Right cardiac atrium (tissue), 5 donors: ENCODE measurements at regions of chr10 and their contacts with region 1.

Region 1: DNA sequence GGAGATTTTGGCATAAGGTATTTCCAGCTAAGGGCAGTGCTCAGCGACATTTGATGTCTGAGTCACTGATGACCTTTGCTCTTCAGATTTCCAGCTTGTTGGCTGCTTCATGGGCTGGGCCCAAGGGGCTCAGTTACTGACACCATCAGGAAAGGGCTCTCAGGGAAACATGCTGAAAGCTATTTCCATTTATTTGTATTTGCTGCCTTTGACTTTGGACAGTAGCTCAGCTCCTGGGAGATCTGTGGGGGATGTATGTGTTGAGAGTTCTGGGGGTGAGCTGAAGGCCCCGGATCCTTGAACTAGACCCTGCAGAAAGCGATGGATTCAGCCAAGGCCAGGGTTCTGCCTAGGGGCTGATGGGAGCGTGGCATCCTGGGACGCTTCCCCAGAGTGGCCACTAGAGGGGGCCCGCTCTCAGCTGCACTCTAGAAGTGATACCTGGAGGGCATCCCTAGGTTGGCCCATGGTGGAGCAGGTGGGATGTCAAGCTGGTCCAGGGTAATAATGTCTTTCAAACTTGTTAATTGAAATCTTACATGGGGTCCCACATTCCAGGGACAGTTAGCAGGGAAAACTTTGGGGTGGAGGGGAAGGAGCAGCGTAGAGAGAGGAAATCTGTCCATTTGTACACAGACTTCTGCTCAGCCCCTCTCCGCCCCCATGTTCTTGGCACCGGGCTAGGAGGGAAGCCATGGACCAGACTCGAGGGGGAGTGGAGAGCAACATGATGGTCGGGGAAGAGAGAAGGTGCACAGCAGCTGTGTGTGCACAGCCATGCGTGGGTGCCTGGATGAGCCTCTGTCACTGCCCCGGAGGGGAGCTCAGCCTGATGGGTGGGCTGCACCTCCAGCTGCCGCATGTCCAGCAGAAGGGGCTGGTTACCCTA is 3.0 kb upstream of the BTBD16 start:
- DNase-seq: peak in 2 of 3 donors; percentile 48 to 70
- ATAC-seq: peak; percentile 60 to 76
- H3K4me3 ChIP-seq: no peak overlapping the region
- H3K27ac ChIP-seq: no peak overlapping the region
- H3K4me1 ChIP-seq: no peaks in the 10 kb centered on the region
- H3K27me3 ChIP-seq: no peaks in the 10 kb centered on the region

Region 2: GRCh38 chr10:122044713-122045112 is 223.4 kb before region 1 on chr10:
- intact Hi-C with region 1: loop called in 1 of 4 experiments (anchors 5 kb)
- DNase-seq: no peak
- ATAC-seq: peak; percentile 51 to 55
- H3K4me3 ChIP-seq: no peak overlapping the region
- H3K27ac ChIP-seq: peak overlapping the region; percentile 33
- H3K4me1 ChIP-seq: peaks cover 5% of the 10 kb centered on the region
- H3K27me3 ChIP-seq: no peaks in the 10 kb centered on the region

Region 3: GRCh38 chr10:122142641-122143237 is 125.4 kb before region 1 on chr10:
- intact Hi-C with region 1: loop called in 1 of 4 experiments (anchors 10 kb)
- DNase-seq: peak in 2 of 3 donors; percentile 76 to 82
- ATAC-seq: no peak
- H3K4me3 ChIP-seq: no peak overlapping the region
- H3K27ac ChIP-seq: peak overlapping the region; percentile 85
- H3K4me1 ChIP-seq: peaks cover 30% of the 10 kb centered on the region
- H3K27me3 ChIP-seq: no peaks in the 10 kb centered on the region